Ascending aorta (tissue), 2 donors: ENCODE measurements at regions of chr21 and their contacts with region 1.

Region 1: GRCh38 chr21:26842976-26843932 is 2.0 kb downstream of the ADAMTS1 start:
- DNase-seq: peak; percentile 82 to 97
- H3K4me3 ChIP-seq: peak overlapping the region; percentile 85 to 94
- H3K27ac ChIP-seq: peak overlapping the region; percentile 94 to 98
- H3K4me1 ChIP-seq: peaks cover 4 to 20% of the 10 kb centered on the region in 2 donors
- H3K27me3 ChIP-seq: no peaks in the 10 kb centered on the region
- CTCF ChIP-seq: peak in 2 of 3 experiments; percentile 32 to 43

Region 2: DNA sequence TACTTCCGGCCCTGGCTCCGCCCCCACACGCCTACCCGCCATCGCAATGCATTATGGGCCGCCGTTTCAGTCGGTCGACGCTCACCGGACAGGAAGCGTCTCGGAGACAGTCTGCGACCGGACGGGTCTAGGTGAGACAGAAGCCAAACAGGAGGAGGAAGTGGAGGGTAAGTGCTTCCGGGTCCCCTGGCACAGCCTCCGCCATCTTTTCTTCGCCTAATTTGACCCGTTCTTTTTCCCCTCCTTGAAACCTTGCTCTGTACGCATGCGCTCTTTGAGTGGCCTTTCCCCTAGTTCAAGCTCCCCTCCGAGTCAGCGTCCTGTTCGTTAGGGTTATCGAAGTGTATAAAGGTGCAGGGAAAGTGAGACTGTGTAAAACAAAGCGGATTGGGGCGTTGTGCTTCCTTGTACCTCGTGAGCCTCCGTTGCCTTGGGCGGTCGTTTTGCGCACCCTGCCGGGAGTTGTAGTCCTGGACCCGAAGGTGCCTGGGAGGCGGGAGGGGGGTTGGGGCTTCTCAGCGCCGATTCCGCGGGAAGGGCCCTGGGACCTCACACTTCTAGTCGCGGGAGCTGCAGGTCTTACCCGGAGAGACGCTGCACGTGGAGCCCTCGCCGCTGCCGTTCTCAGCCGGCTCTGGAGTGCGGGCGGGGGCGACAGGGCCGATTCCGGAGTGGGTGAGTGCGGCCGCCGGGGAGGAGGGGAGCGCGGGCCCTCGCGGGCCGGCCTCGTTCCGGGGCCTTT is 1108.2 kb before region 1 on chr21 and contains the starts of genes ATP5PF and GABPA:
- intact Hi-C with region 1: loop called (anchors 10 kb)
- DNase-seq: peak; percentile 92 to 99
- H3K4me3 ChIP-seq: peak within 1 kb of the TSS; percentile 82 to 85
- H3K27ac ChIP-seq: peak within 1 kb of the TSS; percentile 98 to 99
- H3K4me1 ChIP-seq: peaks cover 0 to 24% of the 10 kb centered on the region in 2 donors
- H3K27me3 ChIP-seq: no peaks in the 10 kb centered on the region
- CTCF ChIP-seq: peak in 1 of 3 experiments; percentile 12
- total RNA-seq, gene ATP5PF: 81.8 TPM
- total RNA-seq, gene GABPA: 8.9 TPM

Region 3: DNA sequence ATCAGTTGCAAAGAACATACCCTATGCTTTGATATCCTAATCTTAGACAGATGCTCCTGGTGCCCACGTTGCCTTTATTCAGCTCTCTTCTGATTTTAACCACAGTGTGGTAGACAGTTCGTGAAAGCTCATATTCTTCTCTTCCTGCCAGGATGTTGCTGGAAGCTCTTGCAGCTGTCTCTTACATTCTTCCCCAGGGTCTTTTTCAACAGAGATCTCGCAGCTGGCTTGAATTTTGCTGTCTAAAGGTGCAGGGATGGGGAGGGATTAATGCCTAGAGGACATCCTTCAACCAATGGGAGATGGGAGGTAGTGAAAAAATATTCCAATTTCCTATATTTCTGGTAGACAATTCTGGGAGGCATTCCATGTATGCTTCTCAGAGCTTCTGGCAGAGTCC is 522.7 kb before region 1 on chr21:
- intact Hi-C with region 1: no loop called
- DNase-seq: no peak
- H3K4me3 ChIP-seq: no peak overlapping the region
- H3K27ac ChIP-seq: no peak overlapping the region
- H3K4me1 ChIP-seq: no peaks in the 10 kb centered on the region
- H3K27me3 ChIP-seq: no peaks in the 10 kb centered on the region
- CTCF ChIP-seq: no peak

Region 4: DNA sequence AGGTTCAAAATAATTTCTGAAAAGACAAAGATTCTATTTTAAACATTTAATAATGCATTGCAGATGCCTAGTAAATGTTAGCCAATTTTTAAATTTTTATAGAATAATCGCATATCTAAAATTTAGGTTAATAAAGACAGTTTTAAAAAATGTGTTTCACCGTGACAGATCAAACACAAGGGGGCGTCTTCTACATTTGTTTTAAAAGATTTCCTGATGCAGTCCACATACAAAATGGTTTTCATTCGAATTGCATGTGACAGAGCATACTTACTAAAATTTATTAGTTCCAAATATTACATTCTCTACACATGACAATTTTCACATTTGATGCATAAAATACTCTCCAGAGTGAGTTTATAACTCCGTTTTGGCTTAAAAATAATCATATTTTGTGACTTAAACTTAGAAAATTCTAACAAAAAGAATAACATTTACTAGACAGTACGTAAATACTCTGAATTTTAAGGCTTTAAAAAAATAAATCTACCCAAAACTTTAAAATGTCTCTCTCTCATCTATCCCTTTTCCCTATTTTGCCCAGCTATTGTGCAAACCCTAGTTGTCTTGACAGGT is 73.6 kb before region 1 on chr21:
- intact Hi-C with region 1: loop called (anchors 2 kb)
- DNase-seq: no peak
- H3K4me3 ChIP-seq: no peak overlapping the region
- H3K27ac ChIP-seq: no peak overlapping the region
- H3K4me1 ChIP-seq: no peaks in the 10 kb centered on the region
- H3K27me3 ChIP-seq: no peaks in the 10 kb centered on the region
- CTCF ChIP-seq: peak; percentile 31 to 70 (median 70)

Region 5: GRCh38 chr21:26795866-26796329 is 47.4 kb before region 1 on chr21:
- intact Hi-C with region 1: loop called (anchors 5 kb)
- DNase-seq: no peak
- H3K4me3 ChIP-seq: no peak overlapping the region
- H3K27ac ChIP-seq: peak overlapping the region; percentile 50 to 68
- H3K4me1 ChIP-seq: peaks cover 0 to 11% of the 10 kb centered on the region in 2 donors
- H3K27me3 ChIP-seq: no peaks in the 10 kb centered on the region
- CTCF ChIP-seq: no peak

Region 6: GRCh38 chr21:28336314-28336713 is 1493.1 kb after region 1 on chr21:
- intact Hi-C with region 1: loop called (anchors 5 kb)
- DNase-seq: peak in 1 of 2 donors; percentile 63
- H3K4me3 ChIP-seq: no peak overlapping the region
- H3K27ac ChIP-seq: no peak overlapping the region
- H3K4me1 ChIP-seq: peaks cover 0 to 4% of the 10 kb centered on the region in 2 donors
- H3K27me3 ChIP-seq: no peaks in the 10 kb centered on the region
- CTCF ChIP-seq: peak in 2 of 3 experiments; percentile 17 to 53

Region 7: DNA sequence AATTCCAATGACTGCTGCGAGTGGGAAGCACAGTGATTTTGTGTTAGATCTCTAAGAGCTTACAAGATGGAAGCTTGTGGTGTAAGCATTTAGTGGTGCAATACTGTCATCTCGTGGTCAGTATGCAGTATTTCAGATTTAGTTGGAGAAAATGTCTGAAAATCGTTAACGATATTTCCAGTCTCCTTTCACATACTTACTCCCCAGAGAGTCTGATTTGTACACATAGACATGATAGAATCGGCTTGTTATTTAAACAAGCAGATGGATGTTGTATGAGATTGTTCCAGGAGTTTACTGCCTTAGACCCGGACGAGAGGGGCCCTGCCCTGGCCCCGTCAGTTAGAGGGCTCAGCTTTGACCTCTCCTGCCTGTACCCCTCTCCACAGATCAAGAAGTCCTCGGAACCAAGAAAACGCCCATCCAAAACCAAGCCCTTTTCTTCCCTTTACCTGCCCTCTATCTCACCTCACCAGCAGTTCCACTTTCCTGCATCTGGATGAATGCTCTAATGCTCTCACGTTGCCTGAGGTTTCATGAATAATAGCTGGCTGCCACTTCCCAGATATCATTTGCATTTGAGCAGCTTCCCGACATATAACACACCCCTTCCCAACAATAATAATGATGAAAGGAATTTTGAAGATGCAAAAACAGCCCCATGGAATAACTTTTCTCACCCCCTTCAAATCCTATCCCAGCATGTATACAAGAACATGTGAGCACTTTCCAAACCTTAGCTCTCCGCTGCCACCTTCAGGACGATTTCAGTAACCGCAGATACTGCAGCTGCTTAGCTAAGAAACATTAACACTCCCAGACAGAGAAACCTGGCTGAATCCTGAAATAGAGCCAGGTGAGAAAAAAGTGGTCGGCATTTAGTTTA is 1902.1 kb after region 1 on chr21:
- intact Hi-C with region 1: loop called (anchors 2 kb)
- DNase-seq: peak in 1 of 2 donors; percentile 79
- H3K4me3 ChIP-seq: peak overlapping the region; percentile 52 to 66
- H3K27ac ChIP-seq: peak overlapping the region; percentile 77 to 83
- H3K4me1 ChIP-seq: peaks cover 0 to 8% of the 10 kb centered on the region in 2 donors
- H3K27me3 ChIP-seq: no peaks in the 10 kb centered on the region
- CTCF ChIP-seq: peak; percentile 94 to 95 (median 95)

Region 8: DNA sequence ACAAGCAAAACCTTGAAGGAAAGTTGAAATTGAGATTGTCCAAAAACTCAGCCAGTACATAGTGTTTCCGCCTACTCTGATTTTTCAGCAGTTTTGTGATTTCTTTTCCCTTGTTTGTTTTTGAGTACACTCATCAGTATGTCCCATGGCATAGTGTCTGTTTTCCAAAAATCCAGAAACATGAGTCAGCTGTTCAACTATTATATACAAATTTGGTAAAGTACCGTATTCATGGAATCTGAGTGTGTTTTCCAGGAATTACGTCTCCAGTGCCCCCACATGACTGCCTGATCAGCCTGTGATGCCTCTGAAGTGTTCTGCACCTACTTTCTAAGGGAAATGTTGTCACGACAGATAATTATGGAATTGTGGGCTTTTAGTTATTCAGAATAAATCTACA is 1962.6 kb after region 1 on chr21:
- intact Hi-C with region 1: loop called (anchors 10 kb)
- DNase-seq: peak; percentile 21 to 85
- H3K4me3 ChIP-seq: no peak overlapping the region
- H3K27ac ChIP-seq: peak overlapping the region; percentile 84 to 86
- H3K4me1 ChIP-seq: peaks cover 14 to 38% of the 10 kb centered on the region in 2 donors
- H3K27me3 ChIP-seq: no peaks in the 10 kb centered on the region
- CTCF ChIP-seq: no peak